PC-9 (cell line): ENCODE measurements at regions of chr15 and their contacts with region 1.

Region 1: GRCh38 chr15:66883322-66883911 is 181.4 kb downstream of the SMAD6 start:
- DNase-seq: peak; percentile 96 to 97
- H3K4me3 ChIP-seq: no peak overlapping the region
- H3K27ac ChIP-seq: peak overlapping the region; percentile 74
- H3K4me1 ChIP-seq: peaks cover 35% of the 10 kb centered on the region
- H3K27me3 ChIP-seq: no peaks in the 10 kb centered on the region
- CTCF ChIP-seq: no peak

Region 2: DNA sequence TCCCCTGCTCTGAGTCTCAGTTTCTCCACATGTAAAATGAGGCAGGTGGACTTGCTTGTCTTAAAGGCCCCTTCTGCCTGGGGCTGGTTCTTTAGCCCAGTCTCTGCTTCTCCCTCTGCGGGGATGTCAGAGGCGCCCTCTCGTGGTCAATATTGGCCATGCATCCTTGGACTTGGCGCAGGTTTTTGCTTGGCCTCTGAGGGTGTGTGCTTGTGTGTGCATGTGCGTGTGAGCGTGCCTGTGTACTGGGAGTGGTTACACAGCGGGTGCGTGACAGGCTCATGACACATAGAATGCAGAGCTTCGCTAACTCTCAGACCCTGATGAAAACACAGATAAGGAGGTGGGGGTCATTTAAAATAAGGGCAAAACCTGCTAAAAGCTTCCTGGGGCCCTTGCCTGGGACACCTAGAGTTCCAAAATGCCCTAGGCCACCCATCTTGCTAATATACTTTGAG is 20.5 kb before region 1 on chr15:
- CTCF ChIA-PET with region 1: interaction called, 4 read pairs
- POLR2A ChIA-PET with region 1: no interaction called
- intact Hi-C with region 1: loop called (anchors 2 kb)
- DNase-seq: peak; percentile 72 to 80
- H3K4me3 ChIP-seq: no peak overlapping the region
- H3K27ac ChIP-seq: no peak overlapping the region
- H3K4me1 ChIP-seq: no peaks in the 10 kb centered on the region
- H3K27me3 ChIP-seq: no peaks in the 10 kb centered on the region
- CTCF ChIP-seq: peak; percentile 89

Region 3: DNA sequence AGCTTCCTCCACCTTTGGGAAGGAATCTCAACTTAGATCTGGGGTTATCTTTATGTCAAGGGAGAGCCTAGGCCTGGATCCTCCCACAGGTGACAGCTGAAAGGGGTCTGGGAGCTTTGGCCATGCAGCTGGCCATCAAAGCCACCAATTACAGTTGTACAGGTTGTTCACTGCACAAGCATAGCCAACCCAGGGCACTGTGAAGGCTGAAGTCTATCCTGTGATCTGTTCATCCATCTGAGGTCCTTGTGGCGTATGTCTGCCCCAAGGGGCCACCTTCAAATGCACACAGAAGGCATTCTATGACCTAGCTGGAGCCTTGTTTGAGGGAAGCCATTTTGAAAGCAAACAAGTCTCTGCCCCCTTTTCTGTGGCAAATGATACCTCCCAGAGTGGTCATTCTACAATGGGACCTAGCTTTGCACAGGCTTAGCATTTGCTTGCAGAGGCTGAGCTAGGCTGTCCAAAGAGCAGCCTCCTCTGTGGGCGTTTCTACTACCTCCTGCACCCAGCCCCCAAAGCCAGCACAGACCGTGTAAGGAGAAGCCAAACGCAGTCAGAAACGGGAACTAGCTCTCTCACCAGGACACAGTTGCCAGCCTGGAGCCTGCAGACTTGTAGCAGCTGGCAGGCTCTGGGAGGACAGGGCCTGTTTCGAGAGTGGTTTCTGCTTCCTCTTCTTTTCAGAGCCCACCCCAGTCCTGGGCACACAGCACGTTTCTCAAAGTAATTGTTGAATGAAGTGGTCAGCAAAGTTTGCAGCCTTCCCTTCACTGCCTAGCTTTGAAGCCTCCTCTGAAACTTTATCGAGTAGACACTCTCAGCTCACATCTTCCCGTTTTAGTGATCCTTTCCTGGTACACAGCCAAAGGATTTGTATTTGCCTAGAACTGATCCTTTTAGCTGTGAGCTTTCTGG is 24.7 kb after region 1 on chr15:
- CTCF ChIA-PET with region 1: interaction called, 10 read pairs
- POLR2A ChIA-PET with region 1: interaction called, 3 read pairs
- intact Hi-C with region 1: no loop called
- DNase-seq: no peak
- H3K4me3 ChIP-seq: no peak overlapping the region
- H3K27ac ChIP-seq: no peak overlapping the region
- H3K4me1 ChIP-seq: no peaks in the 10 kb centered on the region
- H3K27me3 ChIP-seq: no peaks in the 10 kb centered on the region
- CTCF ChIP-seq: no peak

Region 4: DNA sequence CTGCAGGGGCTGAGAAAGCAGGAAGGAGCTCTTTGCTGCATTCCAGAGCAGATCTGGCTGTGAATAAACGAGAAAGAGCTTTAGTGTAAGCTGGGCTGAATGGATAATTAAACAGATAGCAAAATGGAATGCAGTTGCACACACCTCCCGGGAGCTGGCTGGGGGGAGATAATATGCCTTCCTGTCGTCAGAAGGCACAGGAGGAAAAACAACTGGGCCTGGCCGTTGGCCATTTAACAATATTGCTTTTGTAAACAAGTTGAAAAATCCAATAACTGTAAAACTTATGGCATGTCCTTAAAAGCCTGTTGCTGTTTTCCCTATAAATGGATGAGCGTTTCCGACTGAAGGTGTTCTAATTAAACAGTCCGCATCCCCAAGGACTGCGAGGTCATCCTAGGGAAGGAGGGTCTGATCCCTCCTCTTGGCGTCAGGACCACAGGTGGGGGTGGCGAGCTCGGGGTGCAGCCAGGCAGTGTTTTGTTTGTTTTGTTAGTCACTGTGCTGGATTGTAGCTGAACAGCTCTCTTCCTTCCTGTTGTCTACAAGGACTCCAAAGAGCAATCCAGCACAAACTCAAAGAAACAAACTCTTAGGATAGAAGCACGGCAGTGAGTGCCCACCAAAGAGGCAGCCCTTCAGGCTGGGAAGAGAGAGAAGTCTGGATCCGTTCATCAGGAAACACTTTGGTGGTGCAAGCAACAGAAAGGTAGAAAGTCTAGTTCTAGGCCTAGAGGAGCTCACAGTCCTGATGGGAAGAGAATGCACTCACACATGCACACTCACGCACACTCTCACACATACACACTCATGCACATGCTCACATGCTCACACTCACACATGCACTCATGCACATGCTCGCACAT is 48.6 kb after region 1 on chr15:
- CTCF ChIA-PET with region 1: interaction called, 5 read pairs
- POLR2A ChIA-PET with region 1: interaction called, 11 read pairs
- intact Hi-C with region 1: loop called (anchors 1 kb)
- DNase-seq: peak; percentile 83 to 91
- H3K4me3 ChIP-seq: peak overlapping the region; percentile 45
- H3K27ac ChIP-seq: peak overlapping the region; percentile 93
- H3K4me1 ChIP-seq: peaks cover 52% of the 10 kb centered on the region
- H3K27me3 ChIP-seq: no peaks in the 10 kb centered on the region
- CTCF ChIP-seq: no peak

Region 5: GRCh38 chr15:68640791-68641331 is 1757.4 kb after region 1 on chr15:
- CTCF ChIA-PET with region 1: no interaction called
- POLR2A ChIA-PET with region 1: interaction called, 15 read pairs
- intact Hi-C with region 1: no loop called
- DNase-seq: no peak
- H3K4me3 ChIP-seq: no peak overlapping the region
- H3K27ac ChIP-seq: no peak overlapping the region
- H3K4me1 ChIP-seq: peaks cover 15% of the 10 kb centered on the region
- H3K27me3 ChIP-seq: no peaks in the 10 kb centered on the region
- CTCF ChIP-seq: no peak